ENCODE measurements at regions of chr4 and their contacts with region 1.

Region 1: DNA sequence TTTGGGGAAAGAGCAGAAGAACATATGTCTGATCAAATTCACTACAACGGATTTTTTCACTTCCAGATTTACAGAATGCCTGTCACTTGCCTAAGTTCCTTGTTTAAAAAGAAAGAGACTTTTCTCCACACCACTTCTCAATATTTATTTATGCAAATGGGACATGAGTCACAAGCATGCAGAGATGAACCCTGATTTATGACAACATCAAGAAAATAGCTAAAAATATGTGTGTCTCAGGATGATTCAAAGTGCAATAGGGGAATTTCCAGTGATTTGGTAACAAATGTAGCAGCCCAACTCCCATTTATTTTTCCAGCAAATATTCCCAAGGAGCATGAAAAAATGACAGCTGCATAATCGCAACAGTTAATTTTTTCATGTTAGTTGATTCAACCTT is 180.4 kb upstream of the FAT1 start:
- DNase-seq: peak; percentile 71
- ATAC-seq: peak; percentile 74
- H3K4me3 ChIP-seq: no peak overlapping the region
- H3K27ac ChIP-seq: peak overlapping the region; percentile 29
- H3K4me1 ChIP-seq: peaks cover 36% of the 10 kb centered on the region
- H3K27me3 ChIP-seq: no peaks in the 10 kb centered on the region
- CTCF ChIP-seq: no peak

Region 2: DNA sequence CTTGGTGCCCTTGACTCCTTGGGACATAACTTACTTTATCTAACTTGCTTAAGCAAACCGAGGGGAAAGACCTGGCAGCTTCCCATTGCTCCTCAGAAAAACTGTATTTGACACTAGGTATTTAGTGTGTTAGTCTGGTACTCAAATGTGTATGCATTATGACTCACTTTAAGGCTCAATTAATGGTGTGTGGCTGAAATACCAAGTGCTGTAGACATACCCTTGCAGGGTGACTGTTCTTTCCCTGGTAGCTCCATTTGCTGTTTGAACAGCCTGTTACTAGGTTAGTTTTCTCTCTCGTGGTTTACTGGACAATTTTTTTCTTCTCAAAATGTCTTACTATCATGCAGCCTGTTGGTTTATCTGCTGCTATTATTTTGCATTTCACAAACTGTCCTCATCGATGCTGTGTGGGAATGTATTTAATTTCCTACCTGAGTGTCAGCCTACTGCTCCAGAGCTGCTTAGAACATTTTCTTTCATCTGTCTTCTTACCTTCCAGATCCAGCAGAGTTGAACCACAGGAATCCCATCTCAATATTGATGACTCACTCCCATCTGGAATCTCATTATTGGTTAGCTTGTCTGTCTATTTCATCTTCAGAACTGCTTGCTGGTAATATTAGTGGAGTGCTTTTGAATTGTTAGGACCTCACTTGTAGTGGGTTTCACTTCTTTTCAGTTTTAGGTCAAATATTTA is 22.4 kb before region 1 on chr4:
- CTCF ChIA-PET with region 1: no interaction called
- POLR2A ChIA-PET with region 1: no interaction called
- intact Hi-C with region 1: no loop called
- DNase-seq: peak; percentile 23
- ATAC-seq: peak; percentile 80
- H3K4me3 ChIP-seq: no peak overlapping the region
- H3K27ac ChIP-seq: no peak overlapping the region
- H3K4me1 ChIP-seq: 0 out of 2 replicates have a peak, but pooled peaks cover 7% of the 10 kb centered on the region
- H3K27me3 ChIP-seq: no peaks in the 10 kb centered on the region
- CTCF ChIP-seq: no peak

Region 3: GRCh38 chr4:186931519-186931918 is 27.4 kb after region 1 on chr4:
- CTCF ChIA-PET with region 1: no interaction called
- POLR2A ChIA-PET with region 1: no interaction called
- intact Hi-C with region 1: loop called (anchors 1 kb)
- DNase-seq: peak; percentile 62
- ATAC-seq: no peak
- H3K4me3 ChIP-seq: no peak overlapping the region
- H3K27ac ChIP-seq: peak overlapping the region; percentile 83
- H3K4me1 ChIP-seq: peaks cover 60% of the 10 kb centered on the region
- H3K27me3 ChIP-seq: no peaks in the 10 kb centered on the region
- CTCF ChIP-seq: no peak

Measured in PC-3 (cell line).